ENCODE measurements at regions of chr5 and their contacts with region 1.

Region 1: GRCh38 chr5:134586866-134587524 is 45.6 kb downstream of the SAR1B start:
- DNase-seq: peak; percentile 95
- ATAC-seq: peak; percentile 91
- H3K4me3 Mint-ChIP-seq: no peak overlapping the region
- H3K27ac Mint-ChIP-seq: peak overlapping the region; percentile 78
- H3K4me1 Mint-ChIP-seq: peaks cover 14% of the 10 kb centered on the region
- H3K27me3 Mint-ChIP-seq: no peaks in the 10 kb centered on the region

Region 2: GRCh38 chr5:134184155-134185135 is 402.6 kb before region 1 on chr5:
- CTCF ChIA-PET with region 1: interaction called, 8 read pairs
- POLR2A ChIA-PET with region 1: no interaction called
- intact Hi-C with region 1: loop called (anchors 2 kb)
- DNase-seq: peak; percentile 88
- ATAC-seq: peak; percentile 99
- H3K4me3 Mint-ChIP-seq: no peak overlapping the region
- H3K27ac Mint-ChIP-seq: no peak overlapping the region
- H3K4me1 Mint-ChIP-seq: no peaks in the 10 kb centered on the region
- H3K27me3 Mint-ChIP-seq: no peaks in the 10 kb centered on the region

Region 3: DNA sequence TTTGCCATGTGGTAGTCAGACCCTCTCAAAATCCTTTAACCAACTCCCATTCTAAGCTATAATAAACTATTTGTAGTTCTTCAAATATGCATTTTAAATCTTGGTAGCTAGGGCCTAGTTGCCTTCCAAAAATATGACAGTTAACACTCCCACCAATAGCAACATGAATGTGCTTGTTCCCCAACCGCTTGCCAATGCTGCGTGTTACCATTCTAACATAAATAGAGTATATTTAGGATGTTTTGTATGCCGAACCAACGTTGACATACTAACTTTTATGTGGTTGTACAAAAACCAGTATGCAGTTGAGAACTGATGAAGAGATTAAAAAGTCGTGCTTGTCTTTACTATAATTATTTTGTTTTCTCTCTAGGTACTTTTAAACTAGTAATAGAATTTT is 206.6 kb before region 1 on chr5:
- CTCF ChIA-PET with region 1: interaction called, 15 read pairs
- POLR2A ChIA-PET with region 1: no interaction called
- intact Hi-C with region 1: no loop called
- DNase-seq: no peak
- ATAC-seq: no peak
- H3K4me3 Mint-ChIP-seq: no peak overlapping the region
- H3K27ac Mint-ChIP-seq: peak overlapping the region; percentile 73
- H3K4me1 Mint-ChIP-seq: peaks cover 40% of the 10 kb centered on the region
- H3K27me3 Mint-ChIP-seq: no peaks in the 10 kb centered on the region

Region 4: DNA sequence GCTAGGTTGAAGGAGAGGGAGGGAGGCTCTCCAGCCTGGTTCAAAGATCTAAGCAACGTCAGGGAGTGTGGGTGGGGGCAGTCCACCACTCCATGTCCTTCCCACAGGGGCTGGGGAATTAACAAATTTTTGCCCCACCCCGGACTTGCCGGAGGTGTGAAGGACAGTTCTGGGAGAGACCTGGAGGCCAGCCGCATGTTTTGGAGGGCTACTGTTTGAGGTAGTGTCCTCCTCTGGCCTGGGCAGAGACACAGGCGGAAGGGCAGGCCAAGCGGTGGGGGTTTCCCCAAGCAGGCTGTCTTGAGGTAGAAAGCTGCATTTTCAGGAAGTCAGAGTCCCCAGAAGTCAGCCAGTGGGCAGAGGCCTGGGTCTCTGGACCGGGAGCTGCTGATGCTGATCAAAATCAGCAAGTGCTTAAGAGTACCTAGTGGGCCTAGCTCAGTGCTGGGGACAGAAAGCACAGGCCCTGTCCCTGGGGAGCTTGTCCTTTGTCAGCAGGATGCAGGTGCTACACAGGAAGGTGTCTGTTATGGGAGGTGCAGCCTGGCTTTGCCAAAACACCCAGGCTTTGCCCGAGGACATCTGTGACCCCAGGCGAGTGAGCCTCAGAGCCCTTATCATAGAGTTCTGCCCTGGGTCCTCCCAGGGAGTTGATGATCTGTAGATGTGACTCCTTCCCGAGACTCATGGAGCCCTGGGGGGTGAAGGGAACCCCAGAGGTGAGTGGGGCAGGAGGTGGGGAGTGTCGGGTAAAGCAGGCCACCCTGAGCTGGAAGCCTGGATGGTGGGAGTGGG is 43.0 kb before region 1 on chr5:
- CTCF ChIA-PET with region 1: interaction called, 16 read pairs
- POLR2A ChIA-PET with region 1: no interaction called
- intact Hi-C with region 1: no loop called
- DNase-seq: peak; percentile 71
- ATAC-seq: peak; percentile 79
- H3K4me3 Mint-ChIP-seq: peak overlapping the region; percentile 71
- H3K27ac Mint-ChIP-seq: peak overlapping the region; percentile 96
- H3K4me1 Mint-ChIP-seq: peaks cover 72% of the 10 kb centered on the region
- H3K27me3 Mint-ChIP-seq: no peaks in the 10 kb centered on the region

Region 5: GRCh38 chr5:134648425-134649162 is 61.6 kb after region 1 on chr5 and contains the start of gene SEC24A:
- CTCF ChIA-PET with region 1: interaction called, 12 read pairs
- POLR2A ChIA-PET with region 1: no interaction called
- intact Hi-C with region 1: no loop called
- DNase-seq: peak; percentile 96
- ATAC-seq: peak; percentile 88
- H3K4me3 Mint-ChIP-seq: peak within 1 kb of the TSS; percentile 87
- H3K27ac Mint-ChIP-seq: peak within 1 kb of the TSS; percentile 99
- H3K4me1 Mint-ChIP-seq: peaks cover 30% of the 10 kb centered on the region
- H3K27me3 Mint-ChIP-seq: no peaks in the 10 kb centered on the region
- total RNA-seq, gene SEC24A: 32.2 to 41.3 TPM

Measured in activated CD4-positive, alpha-beta T cell treated with anti-CD3 and anti-CD28 coated beads for 36 hours (primary cell).